Colonic mucosa (tissue), 4 donors: ENCODE measurements at regions of chr4 and their contacts with region 1.

Region 1: GRCh38 chr4:81844717-81845116 is 373.0 kb upstream of the RASGEF1B start:
- DNase-seq: peak; percentile 84
- H3K4me3 ChIP-seq: no peak overlapping the region
- H3K27ac ChIP-seq: no peak overlapping the region
- H3K4me1 ChIP-seq: no peaks in the 10 kb centered on the region
- H3K27me3 ChIP-seq: no peaks in the 10 kb centered on the region
- CTCF ChIP-seq: peak; percentile 81

Region 2: GRCh38 chr4:81405894-81406401 is 438.8 kb before region 1 on chr4:
- intact Hi-C with region 1: loop called (anchors 2 kb)
- DNase-seq: peak; percentile 69
- H3K4me3 ChIP-seq: peak overlapping the region; percentile 1
- H3K27ac ChIP-seq: no peak overlapping the region
- H3K4me1 ChIP-seq: no peaks in the 10 kb centered on the region
- H3K27me3 ChIP-seq: no peaks in the 10 kb centered on the region
- CTCF ChIP-seq: peak; percentile 66

Region 3: GRCh38 chr4:81471588-81472288 is 373.0 kb before region 1 on chr4 and contains the start of gene RASGEF1B:
- intact Hi-C with region 1: loop called (anchors 5 kb)
- DNase-seq: peak; percentile 92
- H3K4me3 ChIP-seq: peak within 1 kb of the TSS; percentile 82
- H3K27ac ChIP-seq: peak within 1 kb of the TSS; percentile 98
- H3K4me1 ChIP-seq: peaks cover 6% of the 10 kb centered on the region
- H3K27me3 ChIP-seq: no peaks in the 10 kb centered on the region
- CTCF ChIP-seq: no peak
- total RNA-seq, gene RASGEF1B: 7.8 to 24.5 TPM

Region 4: GRCh38 chr4:82201805-82202641 is 357.3 kb after region 1 on chr4:
- intact Hi-C with region 1: loop called (anchors 10 kb)
- DNase-seq: peak; percentile 42
- H3K4me3 ChIP-seq: no peak overlapping the region
- H3K27ac ChIP-seq: no peak overlapping the region
- H3K4me1 ChIP-seq: no peaks in the 10 kb centered on the region
- H3K27me3 ChIP-seq: no peaks in the 10 kb centered on the region
- CTCF ChIP-seq: peak; percentile 46